ENCODE measurements at regions of chrX and their contacts with region 1.

Region 1: DNA sequence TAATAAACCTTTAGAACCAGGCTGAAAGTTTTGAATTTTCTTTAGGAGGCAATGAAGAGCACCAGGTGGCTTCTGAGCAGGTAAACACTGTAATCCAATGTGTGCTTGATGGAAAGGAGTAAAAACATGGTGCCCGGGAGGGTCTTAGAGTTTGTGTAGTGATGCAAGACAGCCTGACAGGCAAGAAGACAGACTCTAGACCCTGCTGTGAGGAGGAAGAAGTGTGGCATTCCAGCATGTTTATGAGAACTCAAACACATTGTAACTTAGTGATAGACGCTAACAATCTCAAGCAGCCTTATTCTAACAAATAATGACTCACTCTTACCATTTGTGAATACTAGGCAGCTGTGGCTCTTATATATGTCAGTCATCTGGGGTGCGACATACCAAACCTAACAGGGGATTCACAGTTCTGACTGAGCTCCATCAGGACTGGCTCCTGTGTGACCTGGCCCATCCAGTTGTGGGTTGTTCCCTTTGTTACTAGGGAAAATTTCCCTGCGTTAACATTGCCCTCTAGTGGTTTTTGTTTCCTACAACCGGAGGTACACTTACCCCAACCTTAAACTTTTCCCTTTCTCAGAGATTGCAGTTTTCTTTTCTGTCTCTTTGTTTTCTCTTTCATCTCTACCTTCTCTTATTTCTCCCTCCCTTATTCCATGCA is 53.8 kb downstream of the VSIG4 start:
- DNase-seq: peak; percentile 13
- ATAC-seq: peak; percentile 89
- H3K4me3 Mint-ChIP-seq: no peak overlapping the region
- H3K27ac Mint-ChIP-seq: no peak overlapping the region
- H3K4me1 Mint-ChIP-seq: peaks cover 16% of the 10 kb centered on the region
- H3K27me3 Mint-ChIP-seq: no peaks in the 10 kb centered on the region
- CTCF ChIP-seq: peak; percentile 29; the same call in 1 of the 2 replicates

Region 2: DNA sequence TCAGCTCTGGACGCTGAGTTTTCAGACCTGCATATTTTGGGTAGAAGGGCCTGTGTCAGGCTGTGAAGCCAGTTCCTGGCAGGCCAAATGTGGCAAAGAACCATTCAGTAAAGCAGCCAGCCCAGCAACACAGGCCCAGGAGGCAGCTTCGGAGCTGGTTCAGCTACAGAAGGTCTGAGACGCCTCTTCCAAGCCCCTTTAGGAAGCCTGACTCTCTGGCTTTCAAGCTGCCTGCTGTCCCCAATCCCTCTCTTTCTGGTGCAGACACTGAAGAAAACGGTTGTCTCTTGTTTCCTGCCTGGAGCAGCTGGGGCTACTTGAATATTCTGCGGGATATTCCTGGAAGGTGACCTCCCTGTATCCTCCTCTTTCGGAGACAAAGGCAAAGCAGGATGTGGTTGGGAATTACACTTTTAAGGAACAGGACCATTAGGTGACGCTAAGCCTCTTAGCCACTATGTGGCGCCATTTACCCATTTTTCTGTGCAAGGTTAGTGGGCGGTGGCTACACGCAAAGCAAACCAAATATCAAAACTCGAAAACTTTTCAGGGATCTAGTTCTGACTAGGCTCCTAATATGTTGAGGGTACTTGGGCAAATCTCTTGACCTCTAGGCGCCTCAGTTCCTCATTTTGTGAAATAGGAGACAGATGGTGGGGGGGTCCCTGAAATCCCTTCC is 404.3 kb before region 1 on chrX:
- CTCF ChIA-PET with region 1: interaction called, 10 read pairs
- POLR2A ChIA-PET with region 1: no interaction called
- DNase-seq: peak; percentile 45
- ATAC-seq: peak; percentile 95
- H3K4me3 Mint-ChIP-seq: no peak overlapping the region
- H3K27ac Mint-ChIP-seq: no peak overlapping the region
- H3K4me1 Mint-ChIP-seq: peaks cover 17% of the 10 kb centered on the region
- H3K27me3 Mint-ChIP-seq: no peaks in the 10 kb centered on the region
- CTCF ChIP-seq: peak; percentile 40; the same call in 1 of the 2 replicates

Region 3: GRCh38 chrX:65871661-65872311 is 114.3 kb before region 1 on chrX:
- CTCF ChIA-PET with region 1: interaction called, 23 read pairs
- POLR2A ChIA-PET with region 1: no interaction called
- DNase-seq: peak; percentile 44
- ATAC-seq: peak; percentile 96
- H3K4me3 Mint-ChIP-seq: no peak overlapping the region
- H3K27ac Mint-ChIP-seq: no peak overlapping the region
- H3K4me1 Mint-ChIP-seq: no peaks in the 10 kb centered on the region
- H3K27me3 Mint-ChIP-seq: no peaks in the 10 kb centered on the region; the same call in 1 of the 2 replicates
- CTCF ChIP-seq: no peak

Region 4: DNA sequence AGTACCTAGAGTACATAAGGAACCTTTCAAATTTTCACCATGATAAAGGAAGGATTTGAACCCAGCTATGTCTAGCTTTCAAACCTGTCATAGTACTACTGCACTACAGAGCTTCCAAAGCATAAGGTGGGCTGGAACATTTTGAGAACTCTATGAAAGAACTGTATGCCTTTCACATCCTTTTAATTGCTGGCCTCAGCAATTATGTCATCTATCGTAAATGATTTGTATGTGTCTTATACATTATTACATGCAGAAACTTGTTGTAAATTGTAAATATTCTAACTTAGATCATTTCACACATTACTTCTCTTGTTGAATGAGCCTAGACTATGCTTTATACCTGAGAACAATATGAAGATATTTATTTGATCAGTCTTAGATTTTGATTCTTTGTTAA is 398.7 kb after region 1 on chrX:
- CTCF ChIA-PET with region 1: no interaction called
- POLR2A ChIA-PET with region 1: no interaction called
- DNase-seq: no peak
- ATAC-seq: no peak
- H3K4me3 Mint-ChIP-seq: no peak overlapping the region
- H3K27ac Mint-ChIP-seq: no peak overlapping the region
- H3K4me1 Mint-ChIP-seq: no peaks in the 10 kb centered on the region
- H3K27me3 Mint-ChIP-seq: peaks cover 3% of the 10 kb centered on the region; the same call in 1 of the 2 replicates
- CTCF ChIP-seq: no peak

Region 5: GRCh38 chrX:66399273-66399672 is 413.2 kb after region 1 on chrX:
- CTCF ChIA-PET with region 1: no interaction called
- POLR2A ChIA-PET with region 1: no interaction called
- DNase-seq: no peak
- ATAC-seq: no peak
- H3K4me3 Mint-ChIP-seq: no peak overlapping the region
- H3K27ac Mint-ChIP-seq: no peak overlapping the region
- H3K4me1 Mint-ChIP-seq: no peaks in the 10 kb centered on the region
- H3K27me3 Mint-ChIP-seq: no peaks in the 10 kb centered on the region; the same call in 1 of the 2 replicates
- CTCF ChIP-seq: no peak

Measured in WTC11 (cell line).